H1 (cell line): ENCODE measurements at regions of chr10 and their contacts with region 1.

Region 1: GRCh38 chr10:13784067-13784466 is 197.3 kb downstream of the PRPF18 start:
- DNase-seq: no peak
- H3K4me3 ChIP-seq: no peak overlapping the region
- H3K27ac ChIP-seq: no peak overlapping the region
- H3K4me1 ChIP-seq: peaks cover 0 to 5% (median 2%) of the 10 kb centered on the region in 4 experiments; a peak in 3 of 7 replicates
- H3K27me3 ChIP-seq: no peaks in the 10 kb centered on the region
- CTCF ChIP-seq: peak; percentile 28 to 57 (median 48)
- EP300 ChIP-seq: no peak
- POLR2A ChIP-seq: no peak
- RAD21 ChIP-seq: peak; percentile 69 to 75

Region 2: GRCh38 chr10:13567030-13567429 is 217.0 kb before region 1 on chr10:
- CTCF ChIA-PET with region 1: no interaction called
- POLR2A ChIA-PET with region 1: no interaction called
- DNase-seq: no peak
- H3K4me3 ChIP-seq: no peak overlapping the region
- H3K27ac ChIP-seq: no peak overlapping the region
- H3K4me1 ChIP-seq: no peaks in the 10 kb centered on the region
- H3K27me3 ChIP-seq: no peaks in the 10 kb centered on the region
- CTCF ChIP-seq: no peak
- EP300 ChIP-seq: no peak
- POLR2A ChIP-seq: no peak
- RAD21 ChIP-seq: no peak

Region 3: GRCh38 chr10:13659897-13660550 is 124.0 kb before region 1 on chr10:
- CTCF ChIA-PET with region 1: interaction called, 11 read pairs
- POLR2A ChIA-PET with region 1: no interaction called
- DNase-seq: peak in 1 of 2 experiments; percentile 81
- H3K4me3 ChIP-seq: no peak overlapping the region
- H3K27ac ChIP-seq: no peak overlapping the region
- H3K4me1 ChIP-seq: no peaks in the 10 kb centered on the region; a peak in 1 of 7 replicates
- H3K27me3 ChIP-seq: no peaks in the 10 kb centered on the region
- CTCF ChIP-seq: peak; percentile 87 to 92 (median 87)
- EP300 ChIP-seq: no peak
- POLR2A ChIP-seq: no peak
- RAD21 ChIP-seq: peak; percentile 87 to 92

Region 4: GRCh38 chr10:13831711-13832141 is 47.7 kb after region 1 on chr10:
- CTCF ChIA-PET with region 1: interaction called, 10 read pairs
- POLR2A ChIA-PET with region 1: interaction called, 3 read pairs
- DNase-seq: no peak
- H3K4me3 ChIP-seq: no peak overlapping the region
- H3K27ac ChIP-seq: peak overlapping the region; percentile 34; the same call in 1 of the 2 replicates
- H3K4me1 ChIP-seq: peaks cover 7 to 25% (median 13%) of the 10 kb centered on the region in 4 experiments; a peak in 6 of 7 replicates
- H3K27me3 ChIP-seq: no peaks in the 10 kb centered on the region
- CTCF ChIP-seq: no peak
- EP300 ChIP-seq: no peak
- POLR2A ChIP-seq: no peak
- RAD21 ChIP-seq: no peak

Region 5: GRCh38 chr10:14032395-14032998 is 248.4 kb after region 1 on chr10:
- CTCF ChIA-PET with region 1: interaction called, 15 read pairs
- POLR2A ChIA-PET with region 1: no interaction called
- DNase-seq: peak; percentile 73 to 96
- H3K4me3 ChIP-seq: no peak overlapping the region
- H3K27ac ChIP-seq: no peak overlapping the region
- H3K4me1 ChIP-seq: no peaks in the 10 kb centered on the region
- H3K27me3 ChIP-seq: no peaks in the 10 kb centered on the region
- CTCF ChIP-seq: peak; percentile 92 to 99 (median 98)
- EP300 ChIP-seq: no peak
- POLR2A ChIP-seq: no peak
- RAD21 ChIP-seq: peak; percentile 80 to 85

Region 6: DNA sequence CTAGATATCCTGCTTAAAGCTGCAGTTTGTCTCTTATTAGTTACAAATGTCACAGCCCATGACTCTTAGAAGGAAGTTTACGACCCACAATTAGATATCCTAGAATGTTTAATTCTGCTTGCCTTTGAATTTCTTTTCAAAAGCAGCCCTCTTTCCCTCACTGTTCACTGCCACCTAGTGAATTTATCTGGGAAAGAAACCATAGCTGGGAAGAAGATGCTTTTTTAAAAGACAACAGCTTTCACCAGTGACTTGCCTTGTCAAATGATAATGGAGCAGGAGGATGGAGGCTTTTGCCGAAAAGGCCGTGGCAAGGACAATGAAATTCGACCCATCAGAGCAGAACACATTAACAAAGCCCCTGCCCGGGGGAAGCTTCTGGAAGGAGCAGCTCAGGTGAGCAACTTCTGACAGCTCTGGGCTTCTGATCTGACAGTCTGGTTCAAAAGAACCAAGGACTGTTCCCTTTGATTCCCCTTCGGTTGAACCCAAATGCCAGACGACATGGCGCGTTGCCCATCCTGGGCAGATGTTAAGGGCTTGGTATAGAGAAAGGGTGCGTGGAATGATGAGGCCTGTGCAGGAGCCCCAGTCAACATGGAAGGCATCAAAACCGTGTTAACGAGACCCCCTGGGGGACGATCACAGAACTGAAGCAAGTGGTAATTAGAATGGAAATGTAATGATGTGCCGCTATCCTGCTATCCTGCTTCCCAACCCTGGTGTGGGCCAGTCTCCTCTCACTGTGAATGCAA is 309.8 kb after region 1 on chr10:
- CTCF ChIA-PET with region 1: interaction called, 15 read pairs
- POLR2A ChIA-PET with region 1: no interaction called
- DNase-seq: peak in 1 of 2 experiments; percentile 65
- H3K4me3 ChIP-seq: peak overlapping the region in 2 of 4 experiments; percentile 16 to 17; a peak in 3 of 8 replicates
- H3K27ac ChIP-seq: no peak overlapping the region
- H3K4me1 ChIP-seq: peaks cover 9 to 18% (median 12%) of the 10 kb centered on the region in 4 experiments
- H3K27me3 ChIP-seq: no peaks in the 10 kb centered on the region
- CTCF ChIP-seq: peak in 2 of 3 experiments; percentile 19 to 42; a peak in 2 of 4 replicates
- EP300 ChIP-seq: no peak
- POLR2A ChIP-seq: no peak
- RAD21 ChIP-seq: peak; percentile 64 to 65